ENCODE measurements at regions of chr14 and their contacts with region 1.

Region 1: DNA sequence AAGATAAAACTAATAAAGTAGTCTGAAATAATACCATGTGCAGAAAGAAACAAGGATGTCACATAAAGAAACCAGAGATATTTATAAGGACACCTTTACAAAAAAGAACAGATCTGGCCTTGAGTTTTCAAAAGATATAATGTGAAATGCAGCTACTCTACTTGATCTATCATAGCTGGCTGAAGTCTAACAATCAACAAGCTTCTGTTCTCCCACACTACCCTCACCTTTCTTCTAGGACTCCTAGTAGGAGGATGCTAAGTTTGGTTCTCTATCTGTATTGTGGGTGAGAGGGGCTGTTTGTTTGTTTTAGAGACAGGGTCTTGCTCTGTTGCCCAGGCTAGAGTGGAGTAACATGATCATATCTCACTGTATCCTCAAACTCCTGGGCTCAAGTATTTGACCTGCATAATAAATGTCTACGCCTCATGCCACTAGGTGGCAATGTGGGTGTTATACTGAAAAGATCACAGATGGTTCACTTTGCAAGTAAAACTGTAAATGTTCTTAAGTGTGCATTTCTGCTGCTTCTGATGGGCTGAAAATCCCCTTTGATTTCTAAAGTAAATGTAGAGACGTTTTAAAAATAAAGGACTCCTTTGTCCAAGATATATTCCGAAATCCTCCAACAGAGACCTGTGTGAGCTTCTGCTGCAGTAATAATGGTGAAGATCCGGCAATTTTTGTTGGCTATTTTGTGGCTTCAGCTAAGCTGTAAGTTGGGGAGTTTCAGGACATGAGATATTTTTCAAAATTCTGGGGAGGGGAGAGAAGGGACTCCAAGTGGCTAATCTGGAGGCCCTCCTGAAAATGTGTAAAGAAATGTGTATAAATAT is 269.3 kb downstream of the DAD1 start:
- DNase-seq: peak; percentile 37
- ATAC-seq: peak; percentile 72

Region 2: DNA sequence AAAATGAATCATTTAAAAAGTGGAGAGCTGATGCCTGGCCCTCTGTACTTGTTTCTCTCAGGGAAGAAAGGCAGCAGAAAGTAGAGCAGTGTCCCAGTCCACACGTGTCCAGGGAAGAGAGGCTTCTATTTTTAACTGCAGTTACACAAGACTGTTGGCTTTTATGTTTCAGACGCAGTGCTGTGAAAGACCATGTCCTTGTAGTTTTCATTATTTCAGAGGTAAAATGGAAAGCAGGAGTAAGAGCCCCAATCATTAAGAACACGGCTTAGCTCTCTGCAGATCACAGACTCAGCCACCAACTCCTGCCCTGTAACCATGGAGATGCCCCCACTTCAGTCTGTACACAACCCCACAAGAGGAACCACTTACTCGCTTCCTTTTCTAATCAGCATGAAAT is 67.1 kb before region 1 on chr14:
- intact Hi-C with region 1: no loop called
- DNase-seq: no peak
- ATAC-seq: peak; percentile 87

Region 3: DNA sequence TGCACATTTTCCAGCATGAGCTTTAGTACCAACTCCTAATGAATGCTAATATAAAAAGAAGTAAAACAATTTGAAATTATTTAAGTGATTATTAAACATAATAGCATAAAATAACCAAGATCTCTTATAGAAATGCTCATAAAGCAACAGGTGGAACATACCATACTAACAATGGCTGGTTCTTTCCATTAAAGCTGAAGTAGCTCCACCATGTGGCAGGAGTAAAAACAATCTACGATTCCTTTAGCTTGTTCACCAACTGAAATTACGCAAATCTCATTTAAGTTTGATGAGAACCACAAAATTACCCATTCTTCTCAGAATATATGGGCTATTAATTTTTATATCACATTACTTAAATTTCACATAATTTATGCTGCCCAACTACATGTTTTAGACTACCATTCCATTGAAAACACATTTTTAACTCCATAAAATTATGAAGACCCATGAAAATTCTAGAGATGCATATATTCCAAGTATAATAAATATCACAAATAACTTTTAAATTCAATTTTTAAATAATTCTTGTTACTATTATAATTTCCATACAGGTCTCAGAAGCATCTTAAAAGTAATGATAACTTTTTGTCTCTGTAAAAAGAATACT is 55.7 kb after region 1 on chr14:
- intact Hi-C with region 1: loop called (anchors 1 kb)
- DNase-seq: no peak
- ATAC-seq: no peak

Measured in left ventricle myocardium superior (tissue), 1 donor.